ENCODE measurements at regions of chr6 and their contacts with region 1.

Region 1: DNA sequence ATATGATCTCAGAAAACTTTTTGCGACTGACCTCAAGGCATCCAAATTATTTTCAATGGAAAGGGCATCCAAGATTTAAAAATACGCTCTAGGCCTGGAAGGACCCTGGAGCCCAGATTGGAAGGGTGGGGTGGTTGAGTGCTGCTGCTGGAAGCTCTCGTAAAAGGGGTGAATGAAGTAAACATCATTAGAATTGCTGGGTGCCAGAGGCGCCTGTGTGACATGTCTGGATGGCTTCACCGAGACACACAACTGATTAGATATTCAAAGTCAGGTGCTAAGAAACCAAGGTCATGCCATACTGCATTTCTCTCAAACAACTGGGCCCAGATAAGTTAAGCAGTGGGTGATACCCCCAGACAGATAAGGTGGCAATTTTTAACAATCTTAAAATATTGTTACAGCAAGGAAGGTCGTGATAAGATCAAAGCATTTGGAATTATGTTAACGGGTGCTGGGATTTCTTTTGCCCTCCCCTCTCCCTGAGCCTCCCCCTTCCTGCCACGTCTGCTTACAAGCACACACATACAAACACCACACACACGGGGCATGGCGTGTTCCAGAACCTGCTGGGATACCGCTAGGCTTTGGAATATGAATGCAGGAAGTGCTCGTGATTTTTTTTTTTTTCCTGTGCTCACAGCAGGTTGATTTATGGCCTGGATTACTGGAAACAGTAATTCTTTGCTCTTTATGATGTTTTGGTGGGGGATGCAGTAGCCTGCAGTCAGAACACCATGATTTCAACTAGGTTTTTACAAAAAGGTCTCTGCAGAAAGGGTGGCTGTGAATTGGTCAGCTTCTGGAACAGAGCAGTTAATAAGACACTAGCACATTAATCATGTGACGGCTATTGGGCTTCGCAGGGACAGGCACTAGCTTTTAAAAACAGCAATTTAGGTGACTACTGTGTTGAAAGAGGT is 551.2 kb downstream of the QKI start:
- DNase-seq: no peak
- H3K4me3 ChIP-seq: no peak overlapping the region
- H3K27ac ChIP-seq: no peak overlapping the region
- H3K4me1 ChIP-seq: no peaks in the 10 kb centered on the region
- H3K27me3 ChIP-seq: no peaks in the 10 kb centered on the region
- CTCF ChIP-seq: no peak
- POLR2A ChIP-seq: no peak

Region 2: DNA sequence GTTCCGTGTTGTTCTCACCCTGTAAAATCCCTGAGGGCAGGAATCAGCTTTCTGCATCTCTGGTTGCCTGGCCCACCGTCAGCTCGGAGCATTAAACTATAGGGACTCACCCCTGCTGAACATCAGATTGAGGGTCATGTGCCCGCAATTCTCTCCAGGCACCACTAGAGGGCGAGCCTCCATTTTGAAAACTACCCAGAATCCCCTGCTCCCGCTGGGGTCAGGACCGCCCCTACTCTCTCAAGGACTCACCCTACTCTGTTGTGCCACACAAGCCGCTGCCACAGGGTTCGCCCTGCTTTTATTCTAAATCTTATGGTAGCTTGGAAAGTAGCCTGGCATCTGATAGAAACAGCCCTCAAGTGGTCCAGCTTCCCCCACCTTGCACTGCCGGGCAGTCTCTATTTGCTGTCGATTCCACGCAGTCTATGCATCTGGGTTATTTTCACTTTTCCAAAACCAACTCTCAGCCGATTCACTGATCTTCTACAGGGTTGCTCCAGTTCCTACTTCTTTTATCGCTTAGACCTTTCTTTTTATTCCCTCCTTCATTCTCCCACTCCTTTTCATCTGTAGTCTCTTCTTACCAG is 795.3 kb before region 1 on chr6:
- intact Hi-C with region 1: loop called (anchors 10 kb)
- DNase-seq: no peak
- H3K4me3 ChIP-seq: no peak overlapping the region
- H3K27ac ChIP-seq: no peak overlapping the region
- H3K4me1 ChIP-seq: no peaks in the 10 kb centered on the region
- H3K27me3 ChIP-seq: no peaks in the 10 kb centered on the region
- CTCF ChIP-seq: peak in 2 of 3 donors; percentile 12 to 33
- POLR2A ChIP-seq: no peak

Region 3: GRCh38 chr6:163695414-163695864 is 270.2 kb before region 1 on chr6:
- intact Hi-C with region 1: no loop called
- DNase-seq: no peak
- H3K4me3 ChIP-seq: no peak overlapping the region
- H3K27ac ChIP-seq: no peak overlapping the region
- H3K4me1 ChIP-seq: no peaks in the 10 kb centered on the region
- H3K27me3 ChIP-seq: no peaks in the 10 kb centered on the region
- CTCF ChIP-seq: no peak
- POLR2A ChIP-seq: no peak

Region 4: DNA sequence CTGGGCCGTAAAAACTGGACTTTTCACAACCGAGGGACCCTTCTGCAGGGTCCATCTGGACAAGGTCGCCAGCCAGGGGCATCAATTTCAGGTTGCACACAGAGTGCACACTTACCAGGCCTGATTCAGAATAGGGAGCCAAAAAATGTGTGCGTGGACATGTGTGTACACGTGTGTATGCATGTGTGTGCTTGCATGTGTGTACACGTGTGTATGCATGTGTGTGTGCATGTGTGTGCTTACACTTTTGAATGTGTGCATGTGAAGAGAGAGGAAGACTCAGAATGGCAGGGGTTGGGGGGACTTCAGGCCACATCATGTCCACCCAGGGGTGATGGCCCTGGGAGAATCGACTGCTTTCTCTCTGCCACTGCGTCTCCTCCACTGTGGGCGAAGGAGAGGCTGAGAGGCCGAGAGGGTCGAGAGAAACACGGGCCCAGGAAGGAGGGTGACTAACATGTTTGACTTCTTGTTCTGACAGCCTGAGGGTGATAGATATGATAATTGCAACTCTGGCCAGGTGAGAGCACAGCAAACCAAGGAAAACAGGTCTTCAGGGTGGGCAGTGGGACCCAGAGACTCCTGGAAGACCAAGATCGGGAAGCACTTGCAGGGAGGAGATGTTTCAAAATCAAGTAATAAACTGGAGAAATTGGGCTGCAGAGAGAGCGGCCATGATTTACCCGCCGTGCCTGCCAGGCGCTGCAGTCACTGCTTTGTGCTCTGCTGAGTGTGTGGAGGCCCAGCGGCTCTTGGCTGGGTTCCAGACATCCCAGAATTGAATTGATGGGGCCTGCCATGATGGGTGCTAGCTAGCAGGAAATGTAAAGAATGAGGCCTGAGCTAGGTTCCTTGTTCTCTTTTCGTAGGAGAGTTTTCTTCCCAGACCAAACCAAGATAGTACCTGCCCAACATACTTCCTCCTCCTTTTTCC is 240.4 kb before region 1 on chr6:
- intact Hi-C with region 1: no loop called
- DNase-seq: no peak
- H3K4me3 ChIP-seq: no peak overlapping the region
- H3K27ac ChIP-seq: no peak overlapping the region
- H3K4me1 ChIP-seq: no peaks in the 10 kb centered on the region
- H3K27me3 ChIP-seq: no peaks in the 10 kb centered on the region
- CTCF ChIP-seq: no peak
- POLR2A ChIP-seq: no peak

Region 5: GRCh38 chr6:165274611-165275010 is 1308.9 kb after region 1 on chr6:
- intact Hi-C with region 1: loop called (anchors 10 kb)
- DNase-seq: no peak
- H3K4me3 ChIP-seq: no peak overlapping the region
- H3K27ac ChIP-seq: no peak overlapping the region
- H3K4me1 ChIP-seq: no peaks in the 10 kb centered on the region
- H3K27me3 ChIP-seq: no peaks in the 10 kb centered on the region
- CTCF ChIP-seq: no peak
- POLR2A ChIP-seq: no peak